ENCODE measurements at regions of chr9 and their contacts with region 1.

Region 1: GRCh38 chr9:127396808-127397497 is at the start of gene SLC2A8:
- DNase-seq: peak; percentile 99 to 100
- H3K4me3 ChIP-seq: peak within 1 kb of the TSS; percentile 92
- H3K4me3 Mint-ChIP-seq: peak within 1 kb of the TSS; percentile 97
- H3K27ac Mint-ChIP-seq: peak within 1 kb of the TSS; percentile 93
- H3K4me1 ChIP-seq: peaks cover 40% of the 10 kb centered on the region
- H3K4me1 Mint-ChIP-seq: peaks cover 18% of the 10 kb centered on the region
- H3K27me3 ChIP-seq: no peaks in the 10 kb centered on the region
- H3K27me3 Mint-ChIP-seq: no peaks in the 10 kb centered on the region
- CTCF ChIP-seq: peak; percentile 36 to 47
- total RNA-seq, gene SLC2A8: 141 and 144 TPM in 2 replicates

Region 2: GRCh38 chr9:127065592-127065991 is 331.4 kb before region 1 on chr9:
- CTCF ChIA-PET with region 1: no interaction called
- POLR2A ChIA-PET with region 1: interaction called, 3 read pairs
- intact Hi-C with region 1: loop called (anchors 5 kb)
- DNase-seq: no peak
- H3K4me3 ChIP-seq: no peak overlapping the region
- H3K4me3 Mint-ChIP-seq: no peak overlapping the region
- H3K27ac Mint-ChIP-seq: peak overlapping the region; percentile 95
- H3K4me1 ChIP-seq: peaks cover 65% of the 10 kb centered on the region
- H3K4me1 Mint-ChIP-seq: peaks cover 32% of the 10 kb centered on the region
- H3K27me3 ChIP-seq: no peaks in the 10 kb centered on the region
- H3K27me3 Mint-ChIP-seq: no peaks in the 10 kb centered on the region
- CTCF ChIP-seq: no peak

Region 3: GRCh38 chr9:127244609-127245601 is 152.0 kb before region 1 on chr9:
- CTCF ChIA-PET with region 1: no interaction called
- POLR2A ChIA-PET with region 1: interaction called, 14 read pairs
- intact Hi-C with region 1: loop called (anchors 5 kb)
- DNase-seq: peak; percentile 97
- H3K4me3 ChIP-seq: peak overlapping the region; percentile 45
- H3K4me3 Mint-ChIP-seq: peak overlapping the region; percentile 88
- H3K27ac Mint-ChIP-seq: peak overlapping the region; percentile 89
- H3K4me1 ChIP-seq: peaks cover 5% of the 10 kb centered on the region; the same call in 1 of the 2 replicates
- H3K4me1 Mint-ChIP-seq: peaks cover 6% of the 10 kb centered on the region
- H3K27me3 ChIP-seq: no peaks in the 10 kb centered on the region
- H3K27me3 Mint-ChIP-seq: no peaks in the 10 kb centered on the region
- CTCF ChIP-seq: no peak

Region 4: DNA sequence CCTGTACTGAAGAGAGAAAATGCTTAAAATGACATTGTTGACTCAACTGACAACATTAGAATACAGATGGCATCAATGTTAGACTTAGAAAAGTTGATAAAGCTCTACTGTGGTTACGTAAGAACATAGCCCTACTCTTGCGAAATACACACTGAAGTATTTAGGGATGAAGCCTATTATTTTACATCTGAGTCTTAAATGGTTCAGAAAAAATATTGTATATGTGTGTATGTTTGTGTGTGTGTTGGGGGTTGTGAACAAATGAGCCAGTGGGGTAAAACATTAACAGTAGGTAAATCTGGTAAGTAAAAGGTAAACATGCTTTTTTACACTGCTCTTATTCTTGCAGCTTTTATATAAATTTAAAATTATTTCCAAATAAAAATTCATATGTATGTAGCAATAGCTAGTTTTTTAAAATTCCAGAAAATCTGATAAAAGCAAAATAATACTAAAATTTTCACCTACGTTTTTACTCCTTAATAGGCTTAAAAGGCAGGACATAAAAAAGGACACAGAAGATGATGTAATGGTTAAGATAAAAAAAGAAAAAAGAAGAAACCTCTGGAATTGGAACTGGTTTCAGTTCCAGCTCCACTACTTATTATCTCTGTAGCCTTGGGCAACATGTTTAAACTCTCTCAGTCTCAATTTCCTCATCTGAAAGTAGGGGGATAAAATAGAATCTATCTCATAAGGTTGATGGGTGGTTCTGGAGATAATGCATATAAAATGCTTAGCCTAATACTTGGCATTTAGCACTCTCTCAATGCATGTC is 88.1 kb before region 1 on chr9:
- CTCF ChIA-PET with region 1: no interaction called
- POLR2A ChIA-PET with region 1: interaction called, 25 read pairs
- intact Hi-C with region 1: loop called (anchors 5 kb)
- DNase-seq: peak in 1 of 2 experiments; percentile 31
- H3K4me3 ChIP-seq: no peak overlapping the region
- H3K4me3 Mint-ChIP-seq: peak overlapping the region; percentile 23
- H3K27ac Mint-ChIP-seq: peak overlapping the region; percentile 54
- H3K4me1 ChIP-seq: peaks cover 22% of the 10 kb centered on the region
- H3K4me1 Mint-ChIP-seq: peaks cover 21% of the 10 kb centered on the region
- H3K27me3 ChIP-seq: no peaks in the 10 kb centered on the region
- H3K27me3 Mint-ChIP-seq: no peaks in the 10 kb centered on the region
- CTCF ChIP-seq: no peak

Region 5: GRCh38 chr9:127366594-127366993 is 30.4 kb before region 1 on chr9:
- CTCF ChIA-PET with region 1: interaction called, 54 read pairs
- POLR2A ChIA-PET with region 1: interaction called, 17 read pairs
- intact Hi-C with region 1: loop called (anchors 1 kb)
- DNase-seq: no peak
- H3K4me3 ChIP-seq: no peak overlapping the region
- H3K4me3 Mint-ChIP-seq: no peak overlapping the region
- H3K27ac Mint-ChIP-seq: no peak overlapping the region
- H3K4me1 ChIP-seq: peaks cover 18% of the 10 kb centered on the region
- H3K4me1 Mint-ChIP-seq: peaks cover 34% of the 10 kb centered on the region
- H3K27me3 ChIP-seq: no peaks in the 10 kb centered on the region
- H3K27me3 Mint-ChIP-seq: no peaks in the 10 kb centered on the region
- CTCF ChIP-seq: no peak